Motor neuron (in vitro differentiated cells): ENCODE measurements at regions of chr21 and their contacts with region 1.

Region 1: DNA sequence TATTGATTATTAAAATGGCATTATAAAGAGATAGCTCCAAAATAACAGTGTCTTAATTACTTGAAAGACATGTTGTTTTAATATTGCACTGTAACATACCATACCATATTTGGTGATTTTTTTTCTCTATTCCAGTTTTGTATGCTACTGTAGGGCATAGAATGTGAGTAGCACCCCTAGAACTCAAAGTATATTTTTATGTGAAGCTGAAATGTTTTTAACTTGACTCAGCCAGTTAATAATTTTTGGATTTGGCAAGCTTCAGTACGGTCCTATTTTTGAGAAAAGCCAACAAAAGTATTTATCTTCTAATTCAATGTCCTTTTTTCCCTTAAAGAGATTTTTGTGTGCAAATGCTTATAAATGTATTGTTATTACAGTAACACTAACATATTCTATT is 593.8 kb downstream of the USP25 start:
- ATAC-seq: no peak
- H3K4me3 ChIP-seq: no peak overlapping the region
- H3K27ac ChIP-seq: no peak overlapping the region
- H3K4me1 ChIP-seq: peaks cover 3 to 25% of the 10 kb centered on the region in 2 donors

Region 2: DNA sequence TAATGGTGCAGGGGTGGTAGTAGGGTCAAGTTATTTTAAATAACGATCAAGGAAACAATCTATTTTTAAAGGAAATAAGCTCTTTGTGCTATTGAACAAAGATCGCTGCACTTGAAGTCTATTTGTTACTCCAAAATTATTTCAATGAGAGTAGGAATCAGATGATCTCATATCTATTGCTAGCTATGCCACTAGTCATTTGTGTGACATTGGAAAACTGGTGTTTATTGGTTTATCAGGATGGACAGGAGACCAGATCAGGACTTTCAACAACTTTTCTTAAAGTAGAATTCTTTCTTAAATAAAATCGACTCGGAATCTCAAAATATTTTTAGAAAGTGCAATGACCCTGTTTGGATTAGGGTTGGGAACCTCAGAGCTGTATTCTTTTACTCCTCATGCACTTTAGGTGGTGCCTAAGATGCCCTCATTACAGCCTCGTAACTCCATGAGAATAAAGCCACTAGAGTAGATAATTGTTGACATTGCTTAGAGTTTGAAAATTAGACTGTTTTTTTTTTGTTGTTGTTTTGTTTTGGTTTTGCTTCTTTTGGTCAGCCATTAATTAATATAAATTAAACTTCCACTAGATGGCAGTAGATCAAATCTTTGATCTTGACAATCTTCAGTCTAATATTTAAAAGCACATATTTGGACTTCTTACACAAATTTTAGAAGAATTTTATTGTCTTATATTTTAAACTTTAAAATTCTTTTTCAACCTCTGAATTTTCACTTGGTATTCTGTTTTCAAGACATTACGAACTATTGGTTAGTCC is 241.4 kb before region 1 on chr21:
- in situ Hi-C with region 1: loop called in 1 of 9 experiments (anchors 10 kb)
- ATAC-seq: no peak
- H3K4me3 ChIP-seq: no peak overlapping the region
- H3K27ac ChIP-seq: no peak overlapping the region
- H3K4me1 ChIP-seq: no peaks in the 10 kb centered on the region